AG04450 (cell line): ENCODE measurements at regions of chr19 and their contacts with region 1.

Region 1: GRCh38 chr19:55503502-55504251 is 15.4 kb downstream of the SSC5D start:
- DNase-seq: peak; percentile 80
- H3K4me3 ChIP-seq: peak overlapping the region; percentile 69
- H3K27ac ChIP-seq: no peak overlapping the region
- H3K27me3 ChIP-seq: no peaks in the 10 kb centered on the region
- CTCF ChIP-seq: peak; percentile 96

Region 2: GRCh38 chr19:54893406-54893805 is 610.3 kb before region 1 on chr19:
- CTCF ChIA-PET with region 1: no interaction called
- POLR2A ChIA-PET with region 1: no interaction called
- DNase-seq: no peak
- H3K4me3 ChIP-seq: no peak overlapping the region
- H3K27ac ChIP-seq: no peak overlapping the region
- H3K27me3 ChIP-seq: no peaks in the 10 kb centered on the region
- CTCF ChIP-seq: no peak

Region 3: DNA sequence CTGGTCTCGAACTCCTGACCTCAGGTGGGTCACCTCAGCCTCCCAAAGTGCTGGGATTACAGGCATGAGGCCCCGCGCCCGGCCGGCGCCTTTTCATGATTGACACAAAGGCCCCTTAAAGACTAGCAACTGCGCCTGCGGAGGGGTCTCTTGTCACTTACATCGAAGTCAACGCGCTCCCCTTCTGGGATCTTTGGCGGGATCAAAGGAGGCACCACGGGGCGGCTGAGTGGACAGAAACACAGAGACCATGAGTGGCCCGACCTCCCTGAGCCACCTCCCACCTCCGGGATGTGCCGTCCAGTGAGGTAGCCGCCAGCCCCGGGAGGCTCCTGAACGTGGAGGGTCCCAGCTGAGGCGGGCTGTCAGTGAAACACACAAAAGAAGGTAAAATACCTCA is 362.0 kb before region 1 on chr19:
- CTCF ChIA-PET with region 1: interaction called, 37 read pairs
- POLR2A ChIA-PET with region 1: interaction called, 4 read pairs
- DNase-seq: no peak
- H3K4me3 ChIP-seq: no peak overlapping the region
- H3K27ac ChIP-seq: no peak overlapping the region
- H3K27me3 ChIP-seq: peaks cover 15% of the 10 kb centered on the region
- CTCF ChIP-seq: no peak

Region 4: DNA sequence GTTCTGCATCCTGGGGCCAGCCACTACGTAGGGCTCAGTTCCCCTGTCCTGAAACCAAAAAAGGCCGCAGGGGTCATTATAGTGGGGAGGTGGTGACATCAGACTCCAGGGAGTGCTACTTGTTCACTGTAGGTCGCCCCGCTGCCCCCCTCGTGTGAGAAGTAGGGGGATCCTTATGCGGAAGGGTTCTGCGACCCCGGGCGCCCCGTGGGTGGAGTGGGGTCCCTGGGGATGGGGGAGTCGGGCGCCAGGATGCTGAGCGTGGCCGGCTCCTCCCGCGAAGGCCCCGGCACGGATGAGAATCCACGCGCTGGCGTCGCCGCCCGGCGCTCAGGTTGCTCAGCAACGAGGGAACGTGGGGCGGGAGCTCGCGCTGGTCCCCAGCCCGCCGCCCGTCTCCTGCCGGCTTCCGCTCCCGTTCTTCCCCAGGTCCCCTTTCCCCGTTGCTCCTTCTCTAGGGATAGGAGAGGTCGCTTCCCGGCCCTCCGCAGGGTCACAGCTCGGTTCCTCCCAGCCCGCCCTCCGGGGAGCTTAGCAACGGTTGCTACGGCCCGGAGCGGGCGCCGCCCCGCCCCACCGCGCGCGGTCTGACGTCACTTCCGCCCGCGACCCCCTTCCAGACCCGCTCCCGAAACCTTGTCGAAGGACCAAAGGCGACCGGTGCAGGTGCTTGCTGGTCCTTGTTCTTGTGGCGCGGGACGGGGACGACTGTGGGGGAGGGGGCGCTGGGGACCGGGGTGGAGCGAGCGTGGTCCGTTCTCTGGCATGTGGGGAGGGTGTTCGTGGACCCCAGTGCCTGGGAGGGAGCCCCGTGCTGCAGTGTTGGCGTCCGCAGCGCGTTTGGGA is 18.9 kb before region 1 on chr19 and contains the start of gene NAT14:
- CTCF ChIA-PET with region 1: interaction called, 62 read pairs
- POLR2A ChIA-PET with region 1: interaction called, 12 read pairs
- DNase-seq: no peak
- H3K4me3 ChIP-seq: peak within 1 kb of the TSS; percentile 77
- H3K27ac ChIP-seq: peak within 1 kb of the TSS; percentile 52
- H3K27me3 ChIP-seq: no peaks in the 10 kb centered on the region
- CTCF ChIP-seq: no peak
- polyA plus RNA-seq, gene NAT14: 19.4 and 30.6 TPM in 2 replicates

Region 5: DNA sequence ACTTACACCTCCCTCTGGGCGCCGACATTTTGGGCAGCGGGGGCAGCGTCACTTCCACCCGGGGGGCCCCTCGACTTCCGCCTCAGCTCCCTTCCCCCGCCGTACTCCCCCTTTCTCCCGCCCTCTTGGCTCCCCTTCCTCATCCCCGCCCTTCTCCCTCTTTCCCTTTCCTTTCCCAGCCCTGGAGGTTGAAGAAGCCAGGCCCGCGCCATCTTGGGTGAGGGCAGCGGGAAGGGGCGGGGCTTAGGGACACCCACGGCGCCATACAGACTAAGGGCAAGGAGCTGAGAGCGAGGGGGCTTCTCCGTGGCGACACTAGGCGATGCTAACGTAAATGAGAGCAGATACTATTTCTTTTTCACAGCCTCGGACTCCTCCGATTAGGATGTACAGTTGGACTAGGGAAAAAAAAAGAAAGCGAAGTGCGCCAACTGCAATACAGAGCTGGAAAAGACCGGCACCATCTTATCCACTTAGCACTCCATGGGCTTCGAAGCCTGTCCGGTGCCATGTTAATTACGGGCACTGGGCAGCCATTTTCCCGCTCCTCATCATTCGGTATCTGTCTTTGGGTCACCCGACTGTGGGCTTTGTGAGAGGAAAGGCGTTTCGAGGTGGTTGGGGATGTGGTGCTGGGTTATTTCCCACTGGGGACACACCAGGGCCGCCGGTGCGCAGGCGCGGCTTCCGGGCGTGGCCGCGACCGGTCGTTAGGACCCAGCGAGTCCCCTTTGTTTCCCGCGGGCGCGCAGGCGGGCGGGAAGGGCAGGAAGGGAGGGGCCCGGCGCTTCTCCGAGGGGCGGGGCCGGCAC is 96.0 kb after region 1 on chr19 and contains the start of gene FIZ1:
- CTCF ChIA-PET with region 1: interaction called, 10 read pairs
- POLR2A ChIA-PET with region 1: no interaction called
- DNase-seq: peak; percentile 98
- H3K4me3 ChIP-seq: peak within 1 kb of the TSS; percentile 87
- H3K27ac ChIP-seq: peak within 1 kb of the TSS; percentile 94
- H3K27me3 ChIP-seq: no peaks in the 10 kb centered on the region
- CTCF ChIP-seq: no peak
- polyA plus RNA-seq, gene FIZ1: 3.7 and 4.5 TPM in 2 replicates

Region 6: GRCh38 chr19:55624109-55625003 is 120.7 kb after region 1 on chr19 and contains the start of gene ZNF784:
- CTCF ChIA-PET with region 1: interaction called, 12 read pairs
- POLR2A ChIA-PET with region 1: interaction called, 5 read pairs
- DNase-seq: peak; percentile 81
- H3K4me3 ChIP-seq: peak within 1 kb of the TSS; percentile 77
- H3K27ac ChIP-seq: peak within 1 kb of the TSS; percentile 90
- H3K27me3 ChIP-seq: no peaks in the 10 kb centered on the region
- CTCF ChIP-seq: no peak
- polyA plus RNA-seq, gene ZNF784: 1.9 and 2.8 TPM in 2 replicates